GM10248 (cell line): ENCODE measurements at regions of chr5 and their contacts with region 1.

Region 1: DNA sequence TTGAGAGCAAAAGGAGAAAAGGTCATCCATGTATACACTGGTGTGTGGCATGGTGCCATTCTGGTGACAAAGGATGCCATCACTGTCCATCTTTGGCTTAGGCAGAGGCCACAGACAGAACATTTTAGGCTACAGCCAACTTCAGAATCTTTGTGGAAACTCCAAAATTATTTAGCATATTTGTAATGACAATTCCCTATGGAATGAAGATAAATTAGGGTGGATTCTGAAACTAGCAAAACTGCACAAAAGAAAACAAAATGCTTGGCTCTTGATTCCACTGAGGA is 92.5 kb downstream of the FBXW11 start:
- DNase-seq: no peak
- CTCF ChIP-seq: no peak

Region 2: DNA sequence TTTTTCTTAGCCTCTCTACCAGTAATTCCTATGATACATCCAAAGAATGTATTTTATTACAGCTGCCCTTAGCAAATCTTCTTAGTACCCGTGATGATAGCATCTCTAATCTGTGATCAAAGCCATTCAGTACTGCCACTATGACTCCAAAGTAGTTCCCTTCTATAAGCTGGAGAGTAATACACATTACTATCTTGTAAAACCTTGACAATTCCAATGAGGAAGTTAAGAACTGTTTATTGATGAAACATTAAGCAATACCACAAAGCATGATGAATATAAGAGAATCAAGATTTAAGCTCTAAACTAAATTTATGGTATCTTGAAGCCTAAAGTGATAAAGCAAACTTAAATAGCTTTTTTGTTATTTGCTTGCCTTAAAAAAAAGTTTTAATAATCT is 42.2 kb before region 1 on chr5:
- CTCF ChIA-PET with region 1: interaction called, 10 read pairs
- POLR2A ChIA-PET with region 1: no interaction called
- DNase-seq: no peak
- CTCF ChIP-seq: no peak

Region 3: DNA sequence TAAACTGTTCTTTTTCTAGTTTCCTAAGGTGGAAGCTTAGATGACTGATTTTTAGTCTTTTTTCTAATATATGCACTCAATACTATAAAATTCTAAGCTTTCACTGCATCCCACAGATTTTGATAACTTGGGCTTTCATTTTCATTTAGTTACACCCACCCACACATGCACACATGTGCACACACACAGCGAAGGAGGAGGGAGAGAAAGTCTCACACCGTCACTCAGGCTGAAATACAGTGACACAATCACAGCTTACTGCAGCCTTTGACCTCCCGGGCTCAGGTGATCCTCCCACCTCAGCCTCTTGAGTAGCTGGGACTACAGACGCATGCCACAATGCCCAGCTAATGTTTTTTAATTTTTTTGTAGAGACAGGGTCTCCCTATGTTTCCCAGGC is 31.8 kb before region 1 on chr5:
- CTCF ChIA-PET with region 1: no interaction called
- POLR2A ChIA-PET with region 1: no interaction called
- DNase-seq: no peak
- CTCF ChIP-seq: no peak

Region 4: GRCh38 chr5:171924493-171925122 is 10.7 kb after region 1 on chr5:
- CTCF ChIA-PET with region 1: interaction called, 43 read pairs
- POLR2A ChIA-PET with region 1: no interaction called
- DNase-seq: no peak
- CTCF ChIP-seq: no peak

Region 5: DNA sequence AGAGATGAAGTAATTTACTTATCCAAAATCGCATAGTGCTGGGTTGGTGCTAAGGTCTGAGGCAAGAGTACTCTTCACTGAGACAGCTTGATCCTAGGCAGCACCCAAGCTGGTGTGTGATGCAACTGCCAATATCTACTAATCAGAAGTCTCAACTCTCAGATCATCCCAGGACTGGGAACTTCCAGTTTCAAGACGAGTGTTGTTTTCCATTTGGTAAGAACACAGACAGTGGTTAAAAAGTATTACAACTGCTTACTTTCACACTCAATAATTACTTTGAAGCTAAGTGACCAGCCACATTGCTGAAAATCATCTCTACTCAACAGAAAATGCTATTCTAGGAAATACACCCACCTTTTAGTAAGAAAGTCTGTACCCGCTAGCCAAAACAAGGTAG is 47.2 kb after region 1 on chr5:
- CTCF ChIA-PET with region 1: interaction called, 14 read pairs
- POLR2A ChIA-PET with region 1: interaction called, 3 read pairs
- DNase-seq: peak; percentile 60
- CTCF ChIP-seq: no peak

Region 6: GRCh38 chr5:172006321-172007174 is 92.6 kb after region 1 on chr5 and contains the start of gene FBXW11:
- CTCF ChIA-PET with region 1: interaction called, 42 read pairs
- POLR2A ChIA-PET with region 1: no interaction called
- DNase-seq: peak; percentile 96
- CTCF ChIP-seq: no peak

Region 7: GRCh38 chr5:172044631-172045314 is 130.8 kb after region 1 on chr5:
- CTCF ChIA-PET with region 1: interaction called, 80 read pairs
- POLR2A ChIA-PET with region 1: no interaction called
- DNase-seq: no peak
- CTCF ChIP-seq: no peak

Region 8: DNA sequence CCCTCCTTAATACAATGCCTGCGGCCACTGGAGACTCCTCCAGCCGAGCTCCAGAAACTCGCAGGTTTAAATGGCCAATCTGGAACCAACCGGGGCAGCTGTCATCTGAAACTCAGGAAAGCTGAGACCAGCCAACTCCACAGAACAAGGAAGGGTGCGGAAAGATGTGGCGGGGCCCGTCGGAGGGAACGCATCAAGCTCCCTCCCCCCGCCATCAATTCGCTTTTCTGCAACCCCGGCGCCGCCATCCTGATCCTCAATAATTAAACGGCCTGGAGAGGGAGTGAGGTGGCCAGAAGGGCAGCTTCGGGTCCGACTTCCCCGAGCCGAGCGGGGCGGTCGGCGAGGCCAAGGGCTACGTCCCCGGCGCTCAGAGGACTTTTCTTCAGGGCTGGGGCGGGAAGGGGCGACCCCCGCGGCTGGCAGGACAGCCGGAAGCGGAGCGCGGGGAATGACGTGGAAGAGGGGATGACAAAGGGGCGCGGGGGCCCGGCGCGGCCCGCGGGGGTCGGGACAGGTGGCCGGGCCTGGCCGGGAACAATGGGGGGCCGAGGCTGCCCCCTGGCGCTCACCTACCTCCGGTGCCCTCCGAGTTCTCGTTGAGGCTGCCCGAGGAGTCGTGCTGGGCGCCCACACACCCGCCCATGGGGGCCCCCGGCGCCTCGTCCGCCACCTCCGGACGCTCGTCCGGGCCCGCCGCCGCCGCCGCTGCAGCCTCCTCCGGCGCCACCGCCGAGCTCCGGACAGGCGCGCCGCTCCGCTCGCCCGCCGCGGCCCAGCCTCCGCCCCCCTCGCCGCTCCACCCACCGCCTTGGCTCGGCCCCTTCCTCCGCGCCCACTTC is 369.3 kb after region 1 on chr5 and contains the start of gene UBTD2:
- CTCF ChIA-PET with region 1: interaction called, 12 read pairs
- POLR2A ChIA-PET with region 1: no interaction called
- DNase-seq: peak; percentile 89
- CTCF ChIP-seq: peak; percentile 60